ENCODE measurements at regions of chr3 and their contacts with region 1.

Region 1: GRCh38 chr3:134212906-134213665 is 37.6 kb downstream of the RYK start:
- DNase-seq: peak; percentile 75 to 78
- ATAC-seq: peak; percentile 77 to 93 (median 84)
- H3K4me3 ChIP-seq: no peak overlapping the region
- H3K27ac ChIP-seq: no peak overlapping the region
- H3K4me1 ChIP-seq: peaks cover 0 to 46% (median 14%) of the 10 kb centered on the region in 9 donors
- H3K27me3 ChIP-seq: no peaks in the 10 kb centered on the region
- CTCF ChIP-seq: peak; percentile 88 to 99 (median 98)

Region 2: GRCh38 chr3:133812872-133813271 is 400.2 kb before region 1 on chr3:
- intact Hi-C with region 1: loop called in 4 of 10 experiments (anchors 5 to 10 kb)
- DNase-seq: no peak
- ATAC-seq: peak in 2 of 8 donors; percentile 37 to 60
- H3K4me3 ChIP-seq: no peak overlapping the region
- H3K27ac ChIP-seq: no peak overlapping the region
- H3K4me1 ChIP-seq: peaks cover 0 to 8% (median 0%) of the 10 kb centered on the region in 9 donors
- H3K27me3 ChIP-seq: no peaks in the 10 kb centered on the region
- CTCF ChIP-seq: no peak

Region 3: GRCh38 chr3:134299185-134299887 is 86.2 kb after region 1 on chr3:
- intact Hi-C with region 1: loop called (anchors 1 to 5 kb)
- DNase-seq: no peak
- ATAC-seq: peak in 7 of 8 donors; percentile 39 to 86 (median 72)
- H3K4me3 ChIP-seq: no peak overlapping the region
- H3K27ac ChIP-seq: no peak overlapping the region
- H3K4me1 ChIP-seq: peaks cover 0 to 7% (median 0%) of the 10 kb centered on the region in 9 donors
- H3K27me3 ChIP-seq: no peaks in the 10 kb centered on the region
- CTCF ChIP-seq: peak in 7 of 9 donors; percentile 26 to 63 (median 47)

Region 4: GRCh38 chr3:134364061-134364935 is 151.2 kb after region 1 on chr3:
- intact Hi-C with region 1: loop called in 1 of 10 experiments (anchors 10 kb)
- DNase-seq: peak; percentile 94 to 95
- ATAC-seq: peak; percentile 88 to 92 (median 90)
- H3K4me3 ChIP-seq: peak overlapping the region in 8 of 10 donors; percentile 4 to 51 (median 36)
- H3K27ac ChIP-seq: peak overlapping the region; percentile 70 to 100 (median 98)
- H3K4me1 ChIP-seq: peaks cover 45 to 100% (median 97%) of the 10 kb centered on the region in 9 donors
- H3K27me3 ChIP-seq: peaks cover 0 to 15% (median 0%) of the 10 kb centered on the region in 7 donors
- CTCF ChIP-seq: no peak

Region 5: GRCh38 chr3:134485718-134486576 is 272.9 kb after region 1 on chr3 and contains the starts of genes ANAPC13 and CEP63:
- intact Hi-C with region 1: loop called in 1 of 10 experiments (anchors 10 kb)
- DNase-seq: peak; percentile 88 to 97
- ATAC-seq: peak; percentile 91 to 97 (median 94)
- H3K4me3 ChIP-seq: peak within 1 kb of the TSS; percentile 71 to 94 (median 79)
- H3K27ac ChIP-seq: peak within 1 kb of the TSS; percentile 93 to 99 (median 96)
- H3K4me1 ChIP-seq: peaks cover 11 to 53% (median 40%) of the 10 kb centered on the region in 9 donors
- H3K27me3 ChIP-seq: no peaks in the 10 kb centered on the region
- CTCF ChIP-seq: no peak
- total RNA-seq, gene ANAPC13: 68.2 to 119 (median 84.0) TPM
- total RNA-seq, gene CEP63: 27.6 to 38.8 (median 31.0) TPM